ENCODE measurements at regions of chr19 and their contacts with region 1.

Region 1: DNA sequence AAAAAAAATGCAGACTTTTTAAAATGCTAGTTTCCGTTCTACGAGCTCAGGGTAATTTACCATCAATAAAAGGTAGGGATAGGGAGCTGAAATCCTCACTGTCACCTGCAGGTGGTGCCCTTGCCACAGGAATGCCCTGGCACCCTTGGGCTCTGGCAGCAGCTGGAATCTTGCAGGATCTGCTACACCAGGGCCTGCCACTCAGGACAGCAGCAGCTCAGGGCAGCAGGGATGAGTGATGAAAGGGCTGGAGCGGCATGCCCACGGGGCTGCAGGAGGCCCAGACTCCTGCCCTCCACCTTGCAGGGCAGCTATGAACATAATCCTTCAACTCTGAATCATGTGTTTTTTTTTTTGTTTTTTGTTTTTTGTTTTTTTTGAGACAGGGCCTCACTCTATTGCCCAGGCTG is 54.0 kb downstream of the GNG7 start:
- DNase-seq: peak; percentile 43 to 88
- H3K4me3 ChIP-seq: no peak overlapping the region
- H3K27ac ChIP-seq: no peak overlapping the region
- H3K4me1 ChIP-seq: peaks cover 0 to 1% (median 0%) of the 10 kb centered on the region in 4 experiments; a peak in 2 of 7 replicates
- H3K27me3 ChIP-seq: no peaks in the 10 kb centered on the region; a peak in 1 of 7 replicates
- CTCF ChIP-seq: peak; percentile 85 to 92 (median 90)
- EP300 ChIP-seq: no peak
- POLR2A ChIP-seq: no peak
- RAD21 ChIP-seq: peak; percentile 99

Region 2: DNA sequence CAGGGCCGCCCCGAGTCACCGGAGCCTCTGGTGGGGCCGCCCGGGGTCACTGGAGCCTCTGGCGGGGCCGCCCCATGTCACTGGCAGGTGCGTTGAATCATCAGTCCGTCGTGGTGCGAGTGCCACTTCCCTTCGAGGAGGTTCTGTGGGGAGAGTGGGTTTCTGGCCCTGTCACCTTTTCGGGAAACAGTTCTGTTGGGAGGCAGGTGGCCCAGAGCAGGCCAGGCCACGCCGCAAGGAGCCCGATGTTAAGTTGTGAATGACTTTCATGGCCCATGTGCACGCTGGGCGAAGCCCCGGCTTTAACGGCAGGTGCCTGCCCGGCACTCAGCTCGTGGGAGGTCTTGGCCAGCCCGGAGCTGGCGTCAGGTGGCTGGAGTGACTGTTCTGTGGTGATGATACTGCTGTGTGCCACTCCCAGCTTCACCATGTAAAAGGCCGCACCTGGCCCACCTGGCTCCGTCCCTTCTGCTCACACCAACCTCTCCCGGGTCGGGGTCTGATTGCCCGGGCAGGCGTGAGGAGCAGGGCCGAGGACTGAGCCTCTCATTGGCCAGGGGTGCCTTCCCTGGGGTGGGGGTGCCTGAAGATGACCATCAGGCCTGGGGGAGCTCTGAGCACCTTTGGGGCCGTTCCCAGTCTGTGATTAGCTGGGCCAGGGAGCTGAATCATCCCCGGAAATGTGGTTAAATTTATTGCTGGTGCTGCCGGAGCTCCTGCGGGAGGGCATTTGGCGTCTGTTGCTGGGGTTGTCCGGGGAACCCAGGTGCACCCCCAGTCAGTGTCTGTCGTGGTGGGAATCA is 678.3 kb before region 1 on chr19:
- CTCF ChIA-PET with region 1: no interaction called
- POLR2A ChIA-PET with region 1: no interaction called
- DNase-seq: no peak
- H3K4me3 ChIP-seq: no peak overlapping the region
- H3K27ac ChIP-seq: no peak overlapping the region
- H3K4me1 ChIP-seq: no peaks in the 10 kb centered on the region
- H3K27me3 ChIP-seq: no peaks in the 10 kb centered on the region
- CTCF ChIP-seq: no peak
- EP300 ChIP-seq: no peak
- POLR2A ChIP-seq: no peak
- RAD21 ChIP-seq: no peak

Region 3: DNA sequence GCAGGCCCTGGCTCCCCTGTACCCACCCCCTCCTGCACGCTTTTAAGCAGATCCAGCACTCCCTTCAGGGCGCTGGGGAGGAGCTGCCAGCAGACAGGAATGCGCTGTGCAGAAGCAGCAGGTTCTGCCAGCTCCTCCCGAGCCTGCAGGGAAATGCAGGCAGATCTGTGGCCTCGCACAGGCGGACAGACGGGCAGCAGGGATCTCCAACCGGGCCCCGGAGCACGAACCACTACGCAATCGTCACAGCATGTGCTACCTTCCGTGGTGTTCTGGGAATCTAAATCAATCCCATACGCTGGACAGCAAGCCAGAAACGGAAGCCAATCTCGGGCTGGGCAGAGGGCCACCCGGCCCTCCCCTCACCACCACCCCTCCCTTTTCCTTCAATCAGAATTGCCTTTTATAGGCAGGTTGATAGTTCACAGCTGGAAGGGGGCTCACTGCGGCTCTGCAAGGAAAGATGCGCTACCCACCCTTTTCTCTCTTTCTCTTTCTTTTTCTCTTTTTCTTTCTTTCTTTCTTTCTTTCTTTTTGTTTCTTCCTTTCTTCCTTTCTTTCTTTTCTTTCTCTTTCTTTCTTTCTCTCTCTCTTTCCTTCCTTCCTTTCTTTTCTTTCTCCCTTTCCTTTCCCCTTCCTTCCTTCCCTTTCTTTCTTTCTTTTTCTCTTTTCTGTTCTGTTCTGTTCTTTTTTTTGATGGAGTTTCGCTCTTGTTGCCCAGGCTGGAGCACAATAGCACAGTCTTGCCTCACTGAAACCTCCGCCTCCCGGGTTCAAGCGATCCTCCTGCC is 45.9 kb before region 1 on chr19:
- CTCF ChIA-PET with region 1: no interaction called
- POLR2A ChIA-PET with region 1: no interaction called
- DNase-seq: peak in 1 of 2 experiments; percentile 80
- H3K4me3 ChIP-seq: peak overlapping the region in 3 of 4 experiments; percentile 10 to 45 (median 27); a peak in 4 of 8 replicates
- H3K27ac ChIP-seq: no peak overlapping the region
- H3K4me1 ChIP-seq: peaks cover 0 to 8% (median 2%) of the 10 kb centered on the region in 4 experiments; a peak in 4 of 7 replicates
- H3K27me3 ChIP-seq: peaks cover 0 to 4% (median 0%) of the 10 kb centered on the region in 4 experiments; a peak in 2 of 7 replicates
- CTCF ChIP-seq: no peak
- EP300 ChIP-seq: no peak
- POLR2A ChIP-seq: peak in 1 of 2 experiments; percentile 52; a peak in 1 of 3 replicates
- RAD21 ChIP-seq: no peak; a peak in 1 of 4 replicates

Region 4: DNA sequence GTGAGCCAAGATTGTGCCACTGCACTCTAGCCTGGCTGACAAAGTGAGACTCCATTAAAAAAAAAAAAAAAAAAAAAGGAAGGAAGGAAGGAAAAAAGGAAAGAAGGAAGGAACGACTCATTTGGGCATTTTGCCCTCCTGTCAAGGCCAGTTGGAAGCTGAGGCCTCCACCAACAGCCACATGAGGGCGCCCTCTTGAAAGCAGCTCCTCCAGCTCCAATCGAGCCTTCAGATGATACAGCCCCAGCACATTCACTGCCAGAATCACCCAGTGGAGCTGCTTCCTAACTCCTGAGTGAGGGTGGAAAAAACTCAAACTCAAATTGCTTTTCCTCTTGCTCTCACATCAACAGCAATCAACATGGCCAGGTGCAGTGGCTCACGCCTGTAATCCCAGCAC is 13.1 kb after region 1 on chr19:
- CTCF ChIA-PET with region 1: interaction called, 43 read pairs
- POLR2A ChIA-PET with region 1: no interaction called
- DNase-seq: no peak
- H3K4me3 ChIP-seq: no peak overlapping the region
- H3K27ac ChIP-seq: no peak overlapping the region
- H3K4me1 ChIP-seq: no peaks in the 10 kb centered on the region
- H3K27me3 ChIP-seq: no peaks in the 10 kb centered on the region; a peak in 1 of 7 replicates
- CTCF ChIP-seq: peak; percentile 31 to 67 (median 61); a peak in 3 of 4 replicates
- EP300 ChIP-seq: no peak
- POLR2A ChIP-seq: no peak
- RAD21 ChIP-seq: peak; percentile 46 to 57

Region 5: DNA sequence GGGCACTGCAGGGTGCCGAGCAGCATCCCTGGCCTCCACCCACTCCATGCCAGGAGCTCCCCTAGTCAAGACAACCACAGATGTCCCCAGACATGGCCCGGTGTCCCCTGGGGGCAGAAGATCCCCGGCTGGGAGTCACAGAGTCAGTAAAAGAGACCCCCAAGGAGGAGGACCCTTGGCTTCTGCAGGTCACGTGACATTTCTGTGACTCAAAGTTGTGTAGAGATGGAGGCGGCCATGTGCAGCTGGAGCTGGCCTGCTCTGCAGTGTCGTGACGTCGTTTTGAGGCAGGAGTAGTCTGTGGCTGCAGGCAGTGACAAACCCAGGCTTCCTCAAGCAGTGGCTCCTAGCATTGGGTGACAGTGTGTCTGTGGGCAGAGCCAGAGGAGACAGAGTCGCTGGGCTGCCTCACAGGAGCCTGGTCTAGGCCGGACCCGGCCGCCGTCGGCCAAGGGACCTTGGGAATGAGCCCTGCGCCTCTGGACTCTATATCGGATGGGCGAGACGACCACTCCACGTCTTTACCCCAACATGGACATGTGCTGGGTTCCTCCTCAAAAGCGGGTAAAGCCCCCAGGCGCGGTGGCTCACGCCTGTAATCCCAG is 80.4 kb after region 1 on chr19:
- CTCF ChIA-PET with region 1: interaction called, 14 read pairs
- POLR2A ChIA-PET with region 1: no interaction called
- DNase-seq: no peak
- H3K4me3 ChIP-seq: no peak overlapping the region
- H3K27ac ChIP-seq: no peak overlapping the region
- H3K4me1 ChIP-seq: peaks cover 0 to 5% (median 0%) of the 10 kb centered on the region in 4 experiments; a peak in 1 of 7 replicates
- H3K27me3 ChIP-seq: no peaks in the 10 kb centered on the region; a peak in 2 of 7 replicates
- CTCF ChIP-seq: no peak
- EP300 ChIP-seq: no peak
- POLR2A ChIP-seq: no peak
- RAD21 ChIP-seq: no peak

Region 6: GRCh38 chr19:2750808-2751443 is 102.4 kb after region 1 on chr19:
- CTCF ChIA-PET with region 1: interaction called, 117 read pairs
- POLR2A ChIA-PET with region 1: interaction called, 10 read pairs
- DNase-seq: no peak
- H3K4me3 ChIP-seq: no peak overlapping the region
- H3K27ac ChIP-seq: no peak overlapping the region
- H3K4me1 ChIP-seq: no peaks in the 10 kb centered on the region
- H3K27me3 ChIP-seq: peaks cover 0 to 8% (median 2%) of the 10 kb centered on the region in 4 experiments; a peak in 2 of 7 replicates
- CTCF ChIP-seq: no peak
- EP300 ChIP-seq: no peak
- POLR2A ChIP-seq: no peak
- RAD21 ChIP-seq: no peak

Region 7: GRCh38 chr19:2887391-2887914 is 238.9 kb after region 1 on chr19:
- CTCF ChIA-PET with region 1: interaction called, 12 read pairs
- POLR2A ChIA-PET with region 1: no interaction called
- DNase-seq: peak in 1 of 2 experiments; percentile 51
- H3K4me3 ChIP-seq: no peak overlapping the region
- H3K27ac ChIP-seq: no peak overlapping the region
- H3K4me1 ChIP-seq: no peaks in the 10 kb centered on the region
- H3K27me3 ChIP-seq: no peaks in the 10 kb centered on the region
- CTCF ChIP-seq: peak in 2 of 3 experiments; percentile 40 to 63; a peak in 3 of 4 replicates
- EP300 ChIP-seq: no peak
- POLR2A ChIP-seq: no peak
- RAD21 ChIP-seq: peak; percentile 46 to 56

Measured in H1 (cell line).